Gastrocnemius medialis (tissue), 4 donors: ENCODE measurements at regions of chr2 and their contacts with region 1.

Region 1: GRCh38 chr2:99707592-99707991 is 217.8 kb upstream of the REV1 start:
- DNase-seq: no peak
- ATAC-seq: no peak
- H3K4me3 ChIP-seq: peak overlapping the region in 1 of 4 donors; percentile 15
- H3K27ac ChIP-seq: peak overlapping the region in 3 of 4 donors; percentile 33 to 51 (median 38)
- H3K4me1 ChIP-seq: peaks cover 0 to 20% of the 10 kb centered on the region in 2 donors
- H3K27me3 ChIP-seq: no peaks in the 10 kb centered on the region
- CTCF ChIP-seq: no peak
- POLR2A ChIP-seq: no peak

Region 2: GRCh38 chr2:99660616-99661406 is 46.8 kb before region 1 on chr2:
- in situ Hi-C with region 1: no loop called
- intact Hi-C with region 1: loop called (anchors 1 kb)
- DNase-seq: no peak
- ATAC-seq: no peak
- H3K4me3 ChIP-seq: no peak overlapping the region
- H3K27ac ChIP-seq: peak overlapping the region in 3 of 4 donors; percentile 4 to 32 (median 31)
- H3K4me1 ChIP-seq: peaks cover 9 to 17% of the 10 kb centered on the region in 2 donors
- H3K27me3 ChIP-seq: no peaks in the 10 kb centered on the region
- CTCF ChIP-seq: no peak
- POLR2A ChIP-seq: no peak